Endothelial cell of umbilical vein (primary cell): ENCODE measurements at regions of chr15 and their contacts with region 1.

Region 1: GRCh38 chr15:29821416-29822131 is 694 bp downstream of the TJP1 start:
- DNase-seq: peak; percentile 89
- H3K4me3 ChIP-seq: peak overlapping the region; percentile 98 to 100 (median 99)
- H3K27ac ChIP-seq: peak overlapping the region; percentile 94
- H3K4me1 ChIP-seq: peaks cover 45% of the 10 kb centered on the region
- H3K27me3 ChIP-seq: peaks cover 0 to 3% of the 10 kb centered on the region in 2 experiments
- CTCF ChIP-seq: peak; percentile 9 to 46
- POLR2A ChIP-seq: no peak

Region 2: GRCh38 chr15:29674661-29675533 is 146.7 kb before region 1 on chr15:
- CTCF ChIA-PET with region 1: no interaction called
- POLR2A ChIA-PET with region 1: no interaction called
- dilution Hi-C with region 1: loop called (anchors 10 kb)
- intact Hi-C with region 1: no loop called
- DNase-seq: peak; percentile 45
- H3K4me3 ChIP-seq: peak overlapping the region; percentile 49 to 78 (median 62)
- H3K27ac ChIP-seq: peak overlapping the region; percentile 17
- H3K4me1 ChIP-seq: peaks cover 13% of the 10 kb centered on the region
- H3K27me3 ChIP-seq: no peaks in the 10 kb centered on the region
- CTCF ChIP-seq: no peak
- POLR2A ChIP-seq: no peak

Region 3: DNA sequence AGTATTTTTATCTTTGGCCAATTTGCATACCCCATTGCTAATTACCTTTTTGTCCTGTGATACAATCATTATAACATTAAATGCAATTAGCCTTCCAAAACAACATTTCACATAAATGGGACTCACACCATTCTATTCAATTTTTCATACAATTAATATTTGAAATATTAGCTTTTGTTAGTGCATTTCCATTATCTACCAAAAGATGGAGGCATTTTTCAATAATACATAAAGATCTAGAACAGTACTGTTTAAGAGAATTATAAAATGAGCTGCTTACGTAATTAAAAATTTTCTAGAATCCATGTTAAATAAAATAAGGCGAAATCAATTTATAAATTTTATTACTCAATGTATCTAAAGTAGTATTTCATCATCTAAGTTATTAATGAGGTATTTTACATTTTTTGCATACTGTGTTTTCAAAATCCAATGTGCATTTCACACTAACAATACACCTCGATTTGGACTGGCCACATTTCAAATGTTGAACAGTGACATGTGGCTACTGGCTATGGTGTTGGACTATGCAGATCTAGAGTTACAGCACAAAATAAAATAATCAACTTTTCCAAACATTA is 73.6 kb before region 1 on chr15:
- CTCF ChIA-PET with region 1: interaction called, 52 read pairs
- POLR2A ChIA-PET with region 1: interaction called, 3 read pairs
- dilution Hi-C with region 1: no loop called
- intact Hi-C with region 1: loop called (anchors 1 kb)
- DNase-seq: peak; percentile 49
- H3K4me3 ChIP-seq: no peak overlapping the region
- H3K27ac ChIP-seq: no peak overlapping the region
- H3K4me1 ChIP-seq: no peaks in the 10 kb centered on the region
- H3K27me3 ChIP-seq: no peaks in the 10 kb centered on the region
- CTCF ChIP-seq: peak; percentile 7 to 21
- POLR2A ChIP-seq: no peak

Region 4: DNA sequence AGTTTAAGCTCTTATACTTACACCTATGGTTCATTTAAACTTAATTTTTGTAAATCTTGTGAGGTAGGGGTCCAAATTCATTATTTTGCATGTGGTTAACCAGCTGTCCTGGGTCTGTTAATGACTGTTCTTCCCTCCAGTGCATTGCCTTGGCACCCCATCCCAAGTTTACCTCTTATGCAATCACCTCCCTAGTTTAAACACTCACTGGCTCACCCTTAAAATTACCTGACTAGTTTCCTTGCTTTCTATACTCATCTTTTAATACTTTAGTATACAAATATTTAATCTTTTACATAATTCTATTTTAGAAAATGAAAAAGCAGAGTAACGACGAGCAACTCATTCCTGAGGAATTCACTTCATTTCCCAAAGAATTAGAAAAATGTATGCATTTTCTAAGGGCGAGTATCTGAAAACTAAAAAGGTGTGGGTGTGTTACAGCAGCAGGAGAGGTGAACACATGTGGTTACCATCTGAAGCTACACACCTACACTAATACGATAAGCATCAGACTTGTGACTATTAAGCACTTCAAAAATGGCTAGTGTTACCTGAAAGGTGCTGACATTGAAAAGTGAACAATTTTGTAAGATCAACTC is 33.0 kb before region 1 on chr15:
- CTCF ChIA-PET with region 1: no interaction called
- POLR2A ChIA-PET with region 1: no interaction called
- dilution Hi-C with region 1: no loop called
- intact Hi-C with region 1: loop called (anchors 5 kb)
- DNase-seq: no peak
- H3K4me3 ChIP-seq: no peak overlapping the region
- H3K27ac ChIP-seq: no peak overlapping the region
- H3K4me1 ChIP-seq: peaks cover 17% of the 10 kb centered on the region
- H3K27me3 ChIP-seq: no peaks in the 10 kb centered on the region
- CTCF ChIP-seq: no peak
- POLR2A ChIP-seq: no peak

Region 5: DNA sequence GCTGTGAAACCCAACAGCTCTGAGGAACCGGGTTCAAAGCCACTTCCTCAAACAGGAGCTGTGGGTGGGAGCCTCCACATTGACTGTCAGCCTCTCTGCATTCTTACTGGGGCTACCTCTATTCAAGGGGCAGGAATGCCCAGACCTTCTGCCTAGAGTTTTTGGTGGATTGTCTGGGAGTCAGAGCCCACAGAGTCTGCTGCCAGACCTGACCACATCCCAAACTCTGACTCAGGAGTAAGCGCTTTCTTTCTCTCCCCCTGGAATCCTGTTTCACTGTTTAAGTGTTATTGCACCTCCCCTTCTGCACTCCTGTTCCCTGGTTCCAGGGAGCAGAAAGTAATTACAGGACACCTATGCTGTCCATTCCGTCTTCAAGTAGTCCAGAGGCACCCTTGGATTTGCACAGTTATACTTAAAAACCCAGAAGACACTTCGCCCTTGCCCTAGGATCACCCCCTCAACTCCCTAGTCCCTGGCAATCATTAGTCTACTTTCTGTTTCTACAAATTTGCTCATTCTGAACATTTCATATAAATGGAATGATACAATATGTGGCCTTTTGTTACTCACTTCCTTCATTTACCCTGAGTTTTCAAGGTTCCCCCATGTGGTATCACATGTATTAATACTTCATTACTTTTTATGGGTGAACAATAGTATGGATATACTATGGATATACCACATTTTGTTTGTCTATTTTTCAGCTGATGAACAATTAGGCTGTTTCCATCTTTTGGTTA is 38.6 kb after region 1 on chr15:
- CTCF ChIA-PET with region 1: no interaction called
- POLR2A ChIA-PET with region 1: no interaction called
- dilution Hi-C with region 1: no loop called
- intact Hi-C with region 1: loop called (anchors 5 kb)
- DNase-seq: no peak
- H3K4me3 ChIP-seq: no peak overlapping the region
- H3K27ac ChIP-seq: no peak overlapping the region
- H3K4me1 ChIP-seq: no peaks in the 10 kb centered on the region
- H3K27me3 ChIP-seq: peaks cover 0 to 2% of the 10 kb centered on the region in 2 experiments
- CTCF ChIP-seq: no peak
- POLR2A ChIP-seq: no peak

Region 6: GRCh38 chr15:29942143-29942542 is 120.6 kb after region 1 on chr15:
- CTCF ChIA-PET with region 1: no interaction called
- POLR2A ChIA-PET with region 1: no interaction called
- dilution Hi-C with region 1: no loop called
- intact Hi-C with region 1: no loop called
- DNase-seq: no peak
- H3K4me3 ChIP-seq: no peak overlapping the region
- H3K27ac ChIP-seq: no peak overlapping the region
- H3K4me1 ChIP-seq: peaks cover 10% of the 10 kb centered on the region
- H3K27me3 ChIP-seq: no peaks in the 10 kb centered on the region
- CTCF ChIP-seq: peak in 1 of 2 donors; percentile 18
- POLR2A ChIP-seq: no peak